ENCODE measurements at regions of chr7 and their contacts with region 1.

Region 1: DNA sequence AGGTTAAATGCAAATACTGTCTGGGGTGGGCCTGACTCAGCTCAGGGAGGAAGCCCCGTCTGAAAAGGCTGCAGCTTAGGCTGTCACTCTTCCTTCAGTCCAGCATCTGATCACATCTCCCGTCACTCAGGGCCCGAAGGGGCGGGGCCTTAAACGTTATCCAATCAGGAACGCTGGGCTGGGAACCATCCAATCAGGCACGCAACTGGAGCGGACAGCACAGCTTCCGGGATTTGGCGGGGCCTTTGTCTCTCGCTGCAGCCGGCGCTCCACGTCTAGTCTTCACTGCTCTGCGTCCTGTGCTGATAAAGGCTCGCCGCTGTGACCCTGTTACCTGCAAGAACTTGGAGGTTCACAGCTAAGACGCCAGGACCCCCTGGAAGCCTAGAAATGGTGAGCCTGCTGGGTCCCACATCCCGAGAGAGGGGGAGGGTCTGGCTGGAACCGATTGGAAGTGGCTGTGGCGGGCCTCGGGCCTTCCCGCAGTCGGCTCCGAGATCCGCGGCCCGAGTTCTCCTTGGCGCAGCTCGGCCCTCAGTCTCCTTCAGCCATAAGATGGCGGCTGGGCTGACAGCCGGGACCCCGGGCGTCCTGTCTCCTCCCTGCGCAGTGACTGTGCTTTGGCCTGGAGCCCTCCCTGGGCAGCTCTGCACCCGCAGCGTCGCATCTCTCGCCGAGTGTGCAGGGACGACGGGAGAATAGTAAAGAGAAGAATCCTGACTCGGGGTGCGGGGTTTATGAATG is at the start of gene ZNF92:
- DNase-seq: peak; percentile 95
- H3K4me3 Mint-ChIP-seq: peak within 1 kb of the TSS; percentile 98
- H3K27ac Mint-ChIP-seq: peak within 1 kb of the TSS; percentile 93
- H3K4me1 Mint-ChIP-seq: peaks cover 34% of the 10 kb centered on the region
- H3K27me3 Mint-ChIP-seq: no peaks in the 10 kb centered on the region
- total RNA-seq, gene ZNF92: 14.7 and 16.6 TPM in 2 replicates

Region 2: GRCh38 chr7:64313740-64314491 is 1059.9 kb before region 1 on chr7 and contains the start of gene ZNF736:
- intact Hi-C with region 1: loop called (anchors 2 kb)
- DNase-seq: peak; percentile 82
- H3K4me3 Mint-ChIP-seq: peak within 1 kb of the TSS; percentile 96
- H3K27ac Mint-ChIP-seq: peak within 1 kb of the TSS; percentile 95
- H3K4me1 Mint-ChIP-seq: peaks cover 25% of the 10 kb centered on the region
- H3K27me3 Mint-ChIP-seq: no peaks in the 10 kb centered on the region
- total RNA-seq, gene ZNF736: 19.8 and 21.3 TPM in 2 replicates

Region 3: GRCh38 chr7:64665980-64666662 is 707.7 kb before region 1 on chr7 and contains the start of gene ZNF107:
- intact Hi-C with region 1: loop called (anchors 5 kb)
- DNase-seq: peak; percentile 83
- H3K4me3 Mint-ChIP-seq: peak within 1 kb of the TSS; percentile 96
- H3K27ac Mint-ChIP-seq: peak within 1 kb of the TSS; percentile 89
- H3K4me1 Mint-ChIP-seq: peaks cover 16% of the 10 kb centered on the region
- H3K27me3 Mint-ChIP-seq: no peaks in the 10 kb centered on the region
- total RNA-seq, gene ZNF107: 12.6 and 13.5 TPM in 2 replicates

Region 4: DNA sequence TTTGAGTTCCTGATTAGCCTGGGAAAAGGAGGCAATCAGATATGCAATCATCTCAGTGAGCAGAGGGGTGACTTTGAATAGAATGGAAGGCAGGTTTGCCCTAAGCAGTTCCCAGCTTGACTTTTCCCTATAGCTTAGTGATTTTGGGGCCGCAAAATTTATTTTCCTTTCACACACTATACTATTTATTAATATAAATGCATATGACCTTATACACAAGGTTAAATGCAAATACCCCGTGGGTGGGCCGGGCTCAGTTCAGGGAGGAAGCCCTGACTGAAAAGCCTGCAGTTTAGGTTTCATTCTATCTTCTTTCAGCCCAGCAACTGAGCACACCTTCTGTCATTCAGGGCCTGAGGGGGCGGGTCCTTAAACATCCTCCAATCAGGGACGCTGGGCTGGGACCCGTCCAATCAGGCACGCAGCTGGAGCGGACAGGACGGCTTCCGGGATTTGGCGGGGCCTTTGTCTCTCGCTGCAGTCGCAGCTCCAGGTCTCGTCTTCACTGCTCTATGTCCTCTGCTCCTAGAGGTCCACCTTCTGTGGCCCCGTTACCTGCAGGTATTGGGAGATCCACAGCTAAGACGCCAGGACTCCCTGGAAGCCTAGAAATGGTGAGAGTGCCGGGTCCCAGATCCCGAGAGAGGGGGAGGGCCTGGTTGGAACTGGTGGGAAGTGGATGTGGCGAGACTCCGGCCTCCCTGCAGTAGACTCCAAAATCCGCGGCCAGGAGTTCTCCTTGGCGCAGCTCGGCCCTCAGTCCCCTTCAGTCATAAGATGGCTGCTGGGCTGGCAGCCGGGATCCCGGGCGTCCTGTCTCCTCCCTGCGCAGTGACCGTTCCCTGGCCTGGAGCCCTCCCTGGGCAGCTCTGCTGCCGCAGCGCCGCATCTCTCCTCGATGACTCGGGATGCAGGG is 470.7 kb before region 1 on chr7 and contains the start of gene ZNF273:
- intact Hi-C with region 1: loop called (anchors 1 kb)
- DNase-seq: peak; percentile 87
- H3K4me3 Mint-ChIP-seq: peak within 1 kb of the TSS; percentile 98
- H3K27ac Mint-ChIP-seq: peak within 1 kb of the TSS; percentile 93
- H3K4me1 Mint-ChIP-seq: peaks cover 29% of the 10 kb centered on the region
- H3K27me3 Mint-ChIP-seq: no peaks in the 10 kb centered on the region
- total RNA-seq, gene ZNF273: 8.5 and 9.3 TPM in 2 replicates

Region 5: GRCh38 chr7:65037740-65038678 is 335.8 kb before region 1 on chr7:
- intact Hi-C with region 1: loop called (anchors 1 kb)
- DNase-seq: peak; percentile 83
- H3K4me3 Mint-ChIP-seq: peak overlapping the region; percentile 79
- H3K27ac Mint-ChIP-seq: peak overlapping the region; percentile 73
- H3K4me1 Mint-ChIP-seq: peaks cover 16% of the 10 kb centered on the region
- H3K27me3 Mint-ChIP-seq: no peaks in the 10 kb centered on the region

Region 6: GRCh38 chr7:65750511-65751344 is 376.9 kb after region 1 on chr7:
- intact Hi-C with region 1: loop called (anchors 5 kb)
- DNase-seq: peak; percentile 89
- H3K4me3 Mint-ChIP-seq: peak overlapping the region; percentile 100
- H3K27ac Mint-ChIP-seq: peak overlapping the region; percentile 97
- H3K4me1 Mint-ChIP-seq: peaks cover 11% of the 10 kb centered on the region
- H3K27me3 Mint-ChIP-seq: no peaks in the 10 kb centered on the region

Region 7: DNA sequence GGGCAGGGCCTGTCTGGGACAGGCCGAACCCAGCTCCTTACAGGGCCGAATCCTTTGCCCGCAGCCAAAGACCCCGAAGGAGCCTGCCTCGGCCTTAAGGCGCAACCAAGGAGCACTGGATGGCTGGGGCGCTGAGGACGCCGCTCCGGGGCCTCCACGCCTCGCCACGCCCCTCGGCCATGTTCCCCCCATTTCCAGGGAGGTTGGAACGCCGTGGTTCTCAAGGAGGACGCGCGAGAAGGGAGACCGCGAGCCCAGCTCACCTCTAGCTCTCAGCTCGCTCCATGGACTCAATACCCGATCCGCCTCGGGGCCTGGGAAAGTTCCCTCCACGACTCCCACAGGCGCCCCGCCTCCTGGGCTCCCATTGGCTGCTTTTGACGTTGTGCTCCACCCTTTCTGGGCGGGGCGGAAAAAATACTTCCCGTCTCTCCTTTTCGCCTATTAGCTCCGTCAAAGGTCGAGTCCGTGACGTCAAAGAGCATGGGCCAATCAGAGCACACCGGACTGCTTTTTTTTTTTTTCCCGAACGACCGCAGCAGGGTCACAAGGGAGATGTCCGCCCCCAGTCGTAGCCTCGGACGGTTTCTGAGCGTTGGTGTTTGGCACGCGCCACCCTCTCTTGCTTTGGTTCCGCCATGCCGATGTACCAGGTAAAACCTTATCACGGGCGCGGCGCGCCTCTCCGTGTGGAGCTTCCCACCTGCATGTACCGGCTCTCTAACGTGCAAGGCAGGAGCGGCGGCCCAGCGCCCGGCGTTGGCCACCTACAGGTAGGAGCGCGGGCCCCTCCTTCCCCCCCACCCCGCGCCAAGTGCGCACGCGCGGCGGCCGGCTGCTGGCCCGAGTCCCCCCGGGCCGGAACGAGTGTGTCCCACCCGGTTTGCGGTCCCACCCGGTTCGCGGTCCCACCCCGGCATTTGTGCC is 1928.6 kb after region 1 on chr7:
- intact Hi-C with region 1: loop called (anchors 5 kb)
- DNase-seq: peak; percentile 97
- H3K4me3 Mint-ChIP-seq: peak overlapping the region; percentile 88
- H3K27ac Mint-ChIP-seq: peak overlapping the region; percentile 91
- H3K4me1 Mint-ChIP-seq: peaks cover 21% of the 10 kb centered on the region
- H3K27me3 Mint-ChIP-seq: peaks cover 4% of the 10 kb centered on the region

Measured in activated T-helper 1 cell treated with anti-CD3 and anti-CD28 coated beads, Interleukin-12 subunit alpha, Interleukin-12 subunit beta, Interleukin-2, Interleukin-4 antibody, amounts not matched to agents 30 ng/mL and 10 ng/mL and 1 ng/mL, durations not matched to agents 14 hours and 24 hours and 36 hours (primary cell).